ENCODE measurements at regions of chr6 and their contacts with region 1.

Region 1: DNA sequence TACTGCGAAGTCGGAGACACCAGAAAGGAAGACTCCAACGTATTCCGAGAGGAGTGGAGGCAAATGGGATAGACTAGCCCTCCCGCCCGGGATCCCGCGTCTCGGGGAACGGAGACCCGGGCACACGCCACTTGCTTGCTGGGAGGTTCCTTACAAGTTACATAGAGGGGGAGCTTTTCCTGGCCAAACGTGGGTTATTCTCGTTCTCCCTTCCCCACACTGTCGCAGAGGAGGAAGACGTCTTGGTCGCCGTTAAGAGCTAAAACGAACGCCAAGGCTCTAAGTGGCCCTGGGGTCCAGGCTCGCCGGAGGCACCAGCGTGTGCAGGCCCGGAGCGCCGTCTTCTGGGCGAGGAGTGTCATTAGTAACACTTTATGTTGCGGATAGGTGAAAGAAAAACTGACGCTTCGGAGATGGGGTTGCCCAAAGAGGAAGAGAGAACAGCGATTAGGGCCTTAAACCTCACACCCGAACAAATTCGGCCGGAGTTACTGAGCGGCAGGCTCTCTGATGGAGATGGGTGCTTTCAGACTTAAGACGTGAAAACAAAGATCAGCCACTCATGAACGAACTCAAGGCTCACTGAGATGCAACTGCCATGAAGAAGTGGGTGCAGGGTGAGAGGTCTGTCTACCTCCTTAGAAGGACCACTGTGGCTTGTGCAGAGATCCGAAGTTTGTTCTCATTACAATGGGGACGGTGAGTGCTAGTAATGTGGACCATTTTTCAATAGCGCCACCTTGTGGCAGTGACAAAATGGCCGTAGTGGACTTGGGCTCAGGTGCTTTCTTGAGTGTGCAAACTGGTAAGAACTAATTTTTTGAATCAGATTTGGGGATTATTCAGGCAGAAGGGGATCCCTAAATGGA is 11.7 kb upstream of the ZNF311 start:
- DNase-seq: peak; percentile 88
- H3K4me3 Mint-ChIP-seq: peak overlapping the region; percentile 78
- H3K27ac Mint-ChIP-seq: peak overlapping the region; percentile 75
- H3K4me1 Mint-ChIP-seq: peaks cover 9% of the 10 kb centered on the region
- H3K27me3 Mint-ChIP-seq: peaks cover 6% of the 10 kb centered on the region

Region 2: GRCh38 chr6:28683944-28684538 is 332.8 kb before region 1 on chr6:
- CTCF ChIA-PET with region 1: interaction called, 10 read pairs
- POLR2A ChIA-PET with region 1: no interaction called
- intact Hi-C with region 1: loop called (anchors 1 kb)
- DNase-seq: peak; percentile 14
- H3K4me3 Mint-ChIP-seq: peak overlapping the region; percentile 5
- H3K27ac Mint-ChIP-seq: no peak overlapping the region
- H3K4me1 Mint-ChIP-seq: peaks cover 11% of the 10 kb centered on the region
- H3K27me3 Mint-ChIP-seq: peaks cover 46% of the 10 kb centered on the region

Region 3: GRCh38 chr6:28863604-28864320 is 153.0 kb before region 1 on chr6:
- CTCF ChIA-PET with region 1: interaction called, 3 read pairs
- POLR2A ChIA-PET with region 1: interaction called, 4 read pairs
- intact Hi-C with region 1: loop called (anchors 1 kb)
- DNase-seq: peak; percentile 90
- H3K4me3 Mint-ChIP-seq: peak overlapping the region; percentile 82
- H3K27ac Mint-ChIP-seq: peak overlapping the region; percentile 91
- H3K4me1 Mint-ChIP-seq: peaks cover 38% of the 10 kb centered on the region
- H3K27me3 Mint-ChIP-seq: peaks cover 5% of the 10 kb centered on the region

Region 4: DNA sequence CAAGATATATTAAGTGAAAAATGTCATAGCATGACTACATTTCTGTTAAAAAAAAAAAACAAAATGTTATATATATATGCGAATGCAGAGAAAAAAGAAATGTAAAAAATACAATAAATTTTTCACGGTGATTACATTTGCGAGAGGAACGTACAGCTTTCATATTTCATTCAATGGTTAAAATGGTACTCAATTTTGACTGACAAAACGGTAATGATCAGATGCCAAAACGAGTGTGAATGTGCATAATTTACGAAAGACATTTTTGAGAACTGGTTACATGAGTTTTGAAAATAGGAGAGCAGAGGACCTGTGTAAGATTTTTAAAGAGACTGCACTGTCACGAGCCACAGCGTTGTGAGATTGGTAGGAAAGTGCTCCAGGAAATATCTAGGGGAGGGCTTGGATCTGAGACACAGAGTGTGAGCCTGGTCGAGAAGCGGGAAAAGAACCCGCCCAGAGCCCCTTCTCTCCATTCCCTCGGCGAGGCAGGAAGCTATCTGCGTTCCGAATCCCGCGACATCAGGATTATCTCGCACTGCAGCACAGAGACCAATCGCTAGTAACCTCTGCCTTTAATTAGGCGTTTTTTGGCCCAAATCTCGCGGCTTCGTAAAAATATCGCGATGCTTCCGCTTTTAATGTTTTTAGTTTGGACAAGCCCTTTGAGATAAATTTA is 121.5 kb before region 1 on chr6:
- CTCF ChIA-PET with region 1: interaction called, 10 read pairs
- POLR2A ChIA-PET with region 1: interaction called, 3 read pairs
- intact Hi-C with region 1: no loop called
- DNase-seq: peak; percentile 95
- H3K4me3 Mint-ChIP-seq: peak overlapping the region; percentile 86
- H3K27ac Mint-ChIP-seq: peak overlapping the region; percentile 97
- H3K4me1 Mint-ChIP-seq: peaks cover 12% of the 10 kb centered on the region
- H3K27me3 Mint-ChIP-seq: peaks cover 2% of the 10 kb centered on the region

Region 5: DNA sequence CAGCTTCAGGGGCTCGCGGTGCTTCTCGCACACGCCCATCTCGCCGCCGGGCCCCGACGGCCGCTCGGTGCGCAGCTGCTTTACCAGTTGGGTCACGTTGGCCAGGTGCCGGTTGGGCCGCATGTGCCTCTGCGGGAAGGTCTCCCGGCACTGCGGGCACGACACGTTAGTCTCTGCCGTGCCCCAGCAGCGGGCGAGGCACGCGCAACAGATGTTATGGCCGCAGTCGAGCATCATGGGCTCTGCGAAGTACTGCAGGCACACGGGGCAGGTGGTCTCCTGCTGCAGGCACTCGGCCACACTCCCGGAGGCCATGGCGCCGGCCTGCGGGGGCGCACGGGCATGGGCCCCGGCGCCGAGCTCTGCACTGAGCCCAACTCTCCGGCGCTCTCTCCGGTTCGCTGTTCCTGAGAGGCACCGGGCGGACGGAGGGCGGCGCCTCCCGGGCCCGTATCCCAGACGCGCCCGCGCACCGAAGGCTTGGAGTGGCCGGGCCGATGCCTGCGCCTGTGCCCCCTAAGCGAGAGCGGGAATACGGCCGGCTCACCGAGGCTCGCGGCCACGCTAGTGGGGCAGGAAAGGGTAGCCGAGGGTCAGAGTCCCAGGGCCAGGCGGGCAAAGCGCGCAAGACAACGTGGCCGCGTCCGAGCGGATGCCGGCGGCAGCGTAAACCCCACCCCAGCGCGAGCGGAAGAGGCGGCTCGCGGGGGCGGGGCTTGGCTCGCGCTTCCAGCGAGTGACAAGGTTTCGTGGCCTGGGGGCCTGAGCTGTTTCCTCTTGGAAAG is 93.3 kb before region 1 on chr6 and contains the start of gene TRIM27:
- CTCF ChIA-PET with region 1: interaction called, 17 read pairs
- POLR2A ChIA-PET with region 1: no interaction called
- intact Hi-C with region 1: no loop called
- DNase-seq: peak; percentile 87
- H3K4me3 Mint-ChIP-seq: peak within 1 kb of the TSS; percentile 94
- H3K27ac Mint-ChIP-seq: peak within 1 kb of the TSS; percentile 94
- H3K4me1 Mint-ChIP-seq: peaks cover 38% of the 10 kb centered on the region
- H3K27me3 Mint-ChIP-seq: no peaks in the 10 kb centered on the region
- total RNA-seq, gene TRIM27: 49.7 to 54.6 TPM

Region 6: GRCh38 chr6:28981833-28982475 is 34.8 kb before region 1 on chr6:
- CTCF ChIA-PET with region 1: interaction called, 13 read pairs
- POLR2A ChIA-PET with region 1: interaction called, 3 read pairs
- intact Hi-C with region 1: loop called (anchors 1 kb)
- DNase-seq: peak; percentile 80
- H3K4me3 Mint-ChIP-seq: peak overlapping the region; percentile 82
- H3K27ac Mint-ChIP-seq: peak overlapping the region; percentile 93
- H3K4me1 Mint-ChIP-seq: peaks cover 58% of the 10 kb centered on the region
- H3K27me3 Mint-ChIP-seq: peaks cover 27% of the 10 kb centered on the region

Region 7: DNA sequence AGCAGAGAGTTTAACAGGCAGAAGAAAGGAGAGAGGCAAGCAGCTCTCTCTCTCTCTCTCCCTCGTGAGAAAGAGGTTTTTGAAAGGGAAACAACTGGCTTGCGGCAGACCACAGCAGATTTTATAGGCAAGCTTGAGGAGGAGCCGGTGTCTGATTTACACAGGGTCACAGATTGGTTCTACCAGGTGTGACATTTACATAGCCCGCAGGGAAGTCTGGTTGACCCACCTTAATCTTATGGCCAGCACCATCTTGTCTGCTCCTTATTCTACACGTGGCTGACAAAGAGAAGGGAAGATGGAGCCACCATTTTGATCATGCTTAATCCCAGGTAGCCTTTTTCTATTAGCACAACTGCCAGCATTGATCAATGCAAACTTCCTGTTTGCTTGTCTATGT is 219.3 kb after region 1 on chr6:
- CTCF ChIA-PET with region 1: no interaction called
- POLR2A ChIA-PET with region 1: no interaction called
- intact Hi-C with region 1: no loop called
- DNase-seq: no peak
- H3K4me3 Mint-ChIP-seq: no peak overlapping the region
- H3K27ac Mint-ChIP-seq: no peak overlapping the region
- H3K4me1 Mint-ChIP-seq: no peaks in the 10 kb centered on the region
- H3K27me3 Mint-ChIP-seq: peaks cover 20% of the 10 kb centered on the region

Region 8: DNA sequence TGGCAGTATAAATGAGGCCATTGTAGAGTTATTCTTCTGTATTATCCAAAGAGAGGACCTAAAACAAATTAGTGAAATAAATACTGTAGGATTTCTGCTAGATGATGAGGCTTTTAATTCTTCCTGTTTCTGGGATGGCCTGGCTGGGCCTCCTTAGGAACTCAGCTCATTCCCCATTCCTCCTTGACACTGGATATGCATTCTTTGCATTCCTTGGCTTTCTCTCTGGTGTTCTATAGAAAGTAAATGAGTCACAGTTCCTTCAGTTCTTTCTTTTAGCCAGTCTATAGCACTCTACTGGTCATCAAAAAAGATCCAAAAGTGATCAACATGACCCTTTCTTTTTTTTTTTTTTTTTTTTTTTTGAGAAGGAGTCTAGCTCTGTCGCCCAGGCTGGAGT is 430.9 kb after region 1 on chr6:
- CTCF ChIA-PET with region 1: no interaction called
- POLR2A ChIA-PET with region 1: no interaction called
- intact Hi-C with region 1: no loop called
- DNase-seq: no peak
- H3K4me3 Mint-ChIP-seq: no peak overlapping the region
- H3K27ac Mint-ChIP-seq: no peak overlapping the region
- H3K4me1 Mint-ChIP-seq: no peaks in the 10 kb centered on the region
- H3K27me3 Mint-ChIP-seq: peaks cover 58% of the 10 kb centered on the region

Region 9: GRCh38 chr6:29589423-29590048 is 572.7 kb after region 1 on chr6:
- CTCF ChIA-PET with region 1: interaction called, 3 read pairs
- POLR2A ChIA-PET with region 1: no interaction called
- intact Hi-C with region 1: loop called (anchors 10 kb)
- DNase-seq: peak; percentile 58
- H3K4me3 Mint-ChIP-seq: no peak overlapping the region
- H3K27ac Mint-ChIP-seq: no peak overlapping the region
- H3K4me1 Mint-ChIP-seq: no peaks in the 10 kb centered on the region
- H3K27me3 Mint-ChIP-seq: peaks cover 14% of the 10 kb centered on the region

Measured in activated CD4-positive, alpha-beta memory T cell treated with anti-CD3 and anti-CD28 coated beads for 36 hours (primary cell).